B cell (primary cell): ENCODE measurements at regions of chr1 and their contacts with region 1.

Region 1: GRCh38 chr1:109099938-109100773 is 9.6 kb downstream of the TMEM167B start:
- DNase-seq: peak; percentile 98
- ATAC-seq: peak; percentile 89
- H3K4me3 ChIP-seq: peak overlapping the region; percentile 45 to 90 (median 85)
- H3K4me3 Mint-ChIP-seq: peak overlapping the region; percentile 94
- H3K27ac ChIP-seq: peak overlapping the region; percentile 91 to 94
- H3K27ac Mint-ChIP-seq: peak overlapping the region; percentile 97
- H3K4me1 ChIP-seq: peaks cover 8 to 17% of the 10 kb centered on the region in 2 donors
- H3K4me1 Mint-ChIP-seq: peaks cover 8% of the 10 kb centered on the region
- H3K27me3 ChIP-seq: no peaks in the 10 kb centered on the region
- H3K27me3 Mint-ChIP-seq: no peaks in the 10 kb centered on the region
- CTCF ChIP-seq: peak; percentile 82

Region 2: GRCh38 chr1:108963052-108963686 is 137.0 kb before region 1 on chr1 and contains the start of gene CLCC1:
- CTCF ChIA-PET with region 1: interaction called, 5 read pairs
- POLR2A ChIA-PET with region 1: interaction called, 15 read pairs
- intact Hi-C with region 1: no loop called
- DNase-seq: peak; percentile 97
- ATAC-seq: peak; percentile 91
- H3K4me3 ChIP-seq: peak within 1 kb of the TSS; percentile 56 to 94 (median 76)
- H3K4me3 Mint-ChIP-seq: peak within 1 kb of the TSS; percentile 91
- H3K27ac ChIP-seq: peak within 1 kb of the TSS; percentile 86 to 94
- H3K27ac Mint-ChIP-seq: peak within 1 kb of the TSS; percentile 95
- H3K4me1 ChIP-seq: peaks cover 16 to 17% of the 10 kb centered on the region in 2 donors
- H3K4me1 Mint-ChIP-seq: peaks cover 30% of the 10 kb centered on the region
- H3K27me3 ChIP-seq: no peaks in the 10 kb centered on the region
- H3K27me3 Mint-ChIP-seq: no peaks in the 10 kb centered on the region
- CTCF ChIP-seq: no peak
- total RNA-seq, gene CLCC1: 26.9 and 29.5 TPM in 2 replicates

Region 3: GRCh38 chr1:109041621-109042468 is 58.3 kb before region 1 on chr1 and contains the start of gene WDR47:
- CTCF ChIA-PET with region 1: interaction called, 22 read pairs
- POLR2A ChIA-PET with region 1: interaction called, 21 read pairs
- intact Hi-C with region 1: loop called (anchors 1 kb)
- DNase-seq: peak; percentile 96
- ATAC-seq: peak; percentile 96
- H3K4me3 ChIP-seq: peak within 1 kb of the TSS; percentile 30 to 93 (median 92)
- H3K4me3 Mint-ChIP-seq: peak within 1 kb of the TSS; percentile 97
- H3K27ac ChIP-seq: peak within 1 kb of the TSS; percentile 67 to 75
- H3K27ac Mint-ChIP-seq: peak within 1 kb of the TSS; percentile 95
- H3K4me1 ChIP-seq: peaks cover 7% of the 10 kb centered on the region in 2 donors
- H3K4me1 Mint-ChIP-seq: peaks cover 16% of the 10 kb centered on the region
- H3K27me3 ChIP-seq: no peaks in the 10 kb centered on the region
- H3K27me3 Mint-ChIP-seq: peaks cover 3% of the 10 kb centered on the region
- CTCF ChIP-seq: no peak
- total RNA-seq, gene WDR47: 17.3 and 21.6 TPM in 2 replicates

Region 4: DNA sequence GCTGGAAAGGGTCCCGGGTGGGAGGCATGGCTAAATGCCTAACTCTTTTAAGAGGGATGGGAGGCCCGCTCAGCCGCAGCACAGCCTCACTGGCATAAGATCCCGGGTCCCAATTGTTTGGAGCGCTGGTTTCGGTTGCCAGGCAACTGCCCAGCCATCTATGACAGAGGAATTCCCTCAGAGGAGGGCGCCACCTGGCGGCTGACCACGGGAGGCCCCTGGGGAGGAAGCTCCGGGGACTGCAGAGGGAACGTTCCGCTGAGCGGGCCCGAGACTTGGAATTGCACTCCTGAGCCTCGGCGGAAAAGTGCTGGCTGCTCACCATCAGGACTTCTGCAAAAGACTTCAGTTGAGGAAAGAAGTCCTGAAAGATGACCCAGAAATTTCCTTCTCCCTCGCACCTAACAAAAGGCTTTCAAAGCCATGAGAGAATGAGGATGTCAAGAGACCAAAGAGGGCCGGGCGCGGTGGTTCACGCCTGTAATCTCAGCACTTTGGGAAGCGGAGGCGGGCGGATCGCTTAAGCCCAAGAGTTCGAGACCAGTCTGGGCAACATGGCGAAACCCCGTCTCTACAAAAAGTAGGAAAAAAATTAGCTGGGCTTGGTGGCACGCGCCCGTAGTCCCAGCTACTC is 12.6 kb after region 1 on chr1:
- CTCF ChIA-PET with region 1: interaction called, 64 read pairs
- POLR2A ChIA-PET with region 1: interaction called, 27 read pairs
- intact Hi-C with region 1: loop called (anchors 1 kb)
- DNase-seq: peak; percentile 91
- ATAC-seq: peak; percentile 69
- H3K4me3 ChIP-seq: peak overlapping the region; percentile 30 to 54 (median 37)
- H3K4me3 Mint-ChIP-seq: peak overlapping the region; percentile 85
- H3K27ac ChIP-seq: peak overlapping the region in 1 of 2 donors; percentile 45
- H3K27ac Mint-ChIP-seq: peak overlapping the region; percentile 75
- H3K4me1 ChIP-seq: peaks cover 25 to 26% of the 10 kb centered on the region in 2 donors
- H3K4me1 Mint-ChIP-seq: peaks cover 27% of the 10 kb centered on the region
- H3K27me3 ChIP-seq: peaks cover 0 to 23% (median 20%) of the 10 kb centered on the region in 4 experiments
- H3K27me3 Mint-ChIP-seq: peaks cover 31% of the 10 kb centered on the region
- CTCF ChIP-seq: peak; percentile 85

Region 5: GRCh38 chr1:109213785-109214468 is 113.8 kb after region 1 on chr1 and contains the start of gene SARS1:
- CTCF ChIA-PET with region 1: interaction called, 10 read pairs
- POLR2A ChIA-PET with region 1: interaction called, 17 read pairs
- intact Hi-C with region 1: loop called (anchors 1 kb)
- DNase-seq: peak; percentile 93
- ATAC-seq: peak; percentile 88
- H3K4me3 ChIP-seq: peak within 1 kb of the TSS; percentile 88 to 97 (median 96)
- H3K4me3 Mint-ChIP-seq: peak within 1 kb of the TSS; percentile 100
- H3K27ac ChIP-seq: peak within 1 kb of the TSS; percentile 66 to 73
- H3K27ac Mint-ChIP-seq: peak within 1 kb of the TSS; percentile 98
- H3K4me1 ChIP-seq: peaks cover 22 to 24% of the 10 kb centered on the region in 2 donors
- H3K4me1 Mint-ChIP-seq: peaks cover 35% of the 10 kb centered on the region
- H3K27me3 ChIP-seq: no peaks in the 10 kb centered on the region
- H3K27me3 Mint-ChIP-seq: no peaks in the 10 kb centered on the region
- CTCF ChIP-seq: no peak
- total RNA-seq, gene SARS1: 115 and 119 TPM in 2 replicates

Region 6: GRCh38 chr1:109404838-109405237 is 304.7 kb after region 1 on chr1:
- CTCF ChIA-PET with region 1: no interaction called
- POLR2A ChIA-PET with region 1: no interaction called
- intact Hi-C with region 1: no loop called
- DNase-seq: no peak
- ATAC-seq: no peak
- H3K4me3 ChIP-seq: no peak overlapping the region
- H3K4me3 Mint-ChIP-seq: no peak overlapping the region
- H3K27ac ChIP-seq: no peak overlapping the region
- H3K27ac Mint-ChIP-seq: peak overlapping the region; percentile 8
- H3K4me1 ChIP-seq: peaks cover 0 to 5% of the 10 kb centered on the region in 2 donors
- H3K4me1 Mint-ChIP-seq: peaks cover 6% of the 10 kb centered on the region
- H3K27me3 ChIP-seq: no peaks in the 10 kb centered on the region
- H3K27me3 Mint-ChIP-seq: no peaks in the 10 kb centered on the region
- CTCF ChIP-seq: no peak

Region 7: GRCh38 chr1:109483672-109484518 is 383.7 kb after region 1 on chr1 and contains the start of gene ATXN7L2:
- CTCF ChIA-PET with region 1: no interaction called
- POLR2A ChIA-PET with region 1: interaction called, 5 read pairs
- intact Hi-C with region 1: loop called (anchors 1 kb)
- DNase-seq: peak; percentile 96
- ATAC-seq: peak; percentile 77
- H3K4me3 ChIP-seq: peak within 1 kb of the TSS; percentile 51 to 82 (median 74)
- H3K4me3 Mint-ChIP-seq: peak within 1 kb of the TSS; percentile 96
- H3K27ac ChIP-seq: peak within 1 kb of the TSS; percentile 92 to 95
- H3K27ac Mint-ChIP-seq: peak within 1 kb of the TSS; percentile 88
- H3K4me1 ChIP-seq: peaks cover 12 to 23% of the 10 kb centered on the region in 2 donors
- H3K4me1 Mint-ChIP-seq: peaks cover 28% of the 10 kb centered on the region
- H3K27me3 ChIP-seq: peaks cover 0 to 15% (median 5%) of the 10 kb centered on the region in 4 experiments
- H3K27me3 Mint-ChIP-seq: peaks cover 20% of the 10 kb centered on the region
- CTCF ChIP-seq: no peak
- total RNA-seq, gene ATXN7L2: 10.1 and 10.9 TPM in 2 replicates